ENCODE measurements at regions of chr6 and their contacts with region 1.

Region 1: DNA sequence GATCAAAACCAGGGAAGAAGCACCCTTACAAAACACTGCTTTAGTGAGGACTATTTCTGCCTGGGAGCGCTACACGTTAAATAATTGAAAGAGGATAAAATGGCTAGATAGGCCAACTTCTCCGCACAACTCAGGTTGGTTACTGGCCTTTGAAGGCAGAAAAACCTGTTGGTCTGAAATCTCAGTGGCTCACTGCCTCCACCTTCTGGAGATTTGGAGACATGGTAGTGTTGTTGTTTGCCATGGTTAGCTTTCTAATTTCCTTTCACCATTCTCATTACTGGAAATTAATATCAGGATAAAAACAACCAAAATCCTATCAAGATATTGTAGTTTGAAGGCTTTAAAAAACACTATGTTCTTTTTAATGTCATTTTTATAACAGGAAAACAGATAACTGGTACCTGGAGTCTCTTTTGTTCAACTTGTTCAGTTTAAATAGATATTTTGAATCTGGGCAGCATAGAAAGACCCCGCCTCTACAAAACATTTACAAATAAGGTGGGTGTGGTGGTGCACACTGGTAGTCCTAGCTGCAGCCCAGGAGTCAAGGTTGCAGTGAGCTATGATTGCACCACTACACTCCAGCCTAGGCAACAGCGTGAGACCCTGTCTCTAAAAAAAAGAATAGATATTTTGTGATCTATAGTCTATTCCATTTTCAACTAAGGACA is 27.5 kb upstream of the BCLAF1 start:
- DNase-seq: peak in 1 of 2 experiments; percentile 25
- H3K4me3 ChIP-seq: no peak overlapping the region
- H3K27ac ChIP-seq: no peak overlapping the region
- H3K4me1 ChIP-seq: no peaks in the 10 kb centered on the region
- H3K27me3 ChIP-seq: no peaks in the 10 kb centered on the region
- CTCF ChIP-seq: peak; percentile 17 to 80 (median 72)
- EP300 ChIP-seq: no peak
- POLR2A ChIP-seq: no peak
- RAD21 ChIP-seq: peak; percentile 85 to 86

Region 2: DNA sequence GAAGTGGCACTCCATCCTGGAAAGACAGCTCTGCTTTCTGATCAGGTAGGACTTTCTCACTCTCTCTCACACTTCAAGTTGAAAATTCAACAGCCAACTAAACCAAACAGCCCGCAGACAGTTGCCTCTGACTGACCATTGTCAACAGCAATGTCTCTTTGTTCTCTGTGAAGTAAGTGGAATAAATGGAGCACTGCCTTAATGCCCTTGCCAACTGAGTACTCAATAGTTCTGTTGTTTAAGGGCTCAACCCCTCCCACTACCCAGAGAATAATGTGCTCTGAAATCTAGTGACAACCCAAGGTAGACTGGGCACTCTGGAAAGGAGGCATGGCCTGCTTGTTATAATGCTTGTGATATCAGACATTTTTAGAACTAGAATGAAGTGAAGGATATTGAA is 10.7 kb before region 1 on chr6:
- CTCF ChIA-PET with region 1: interaction called, 23 read pairs
- POLR2A ChIA-PET with region 1: no interaction called
- DNase-seq: no peak
- H3K4me3 ChIP-seq: no peak overlapping the region
- H3K27ac ChIP-seq: no peak overlapping the region
- H3K4me1 ChIP-seq: no peaks in the 10 kb centered on the region
- H3K27me3 ChIP-seq: no peaks in the 10 kb centered on the region
- CTCF ChIP-seq: no peak
- EP300 ChIP-seq: no peak
- POLR2A ChIP-seq: no peak
- RAD21 ChIP-seq: no peak

Region 3: GRCh38 chr6:136334853-136335252 is 17.7 kb after region 1 on chr6:
- CTCF ChIA-PET with region 1: interaction called, 30 read pairs
- POLR2A ChIA-PET with region 1: interaction called, 10 read pairs
- DNase-seq: peak in 1 of 2 experiments; percentile 76
- H3K4me3 ChIP-seq: no peak overlapping the region
- H3K27ac ChIP-seq: no peak overlapping the region
- H3K4me1 ChIP-seq: no peaks in the 10 kb centered on the region; a peak in 1 of 7 replicates
- H3K27me3 ChIP-seq: no peaks in the 10 kb centered on the region; a peak in 1 of 7 replicates
- CTCF ChIP-seq: peak; percentile 48 to 77 (median 63)
- EP300 ChIP-seq: no peak
- POLR2A ChIP-seq: no peak
- RAD21 ChIP-seq: peak; percentile 37 to 43; a peak in 3 of 4 replicates

Region 4: DNA sequence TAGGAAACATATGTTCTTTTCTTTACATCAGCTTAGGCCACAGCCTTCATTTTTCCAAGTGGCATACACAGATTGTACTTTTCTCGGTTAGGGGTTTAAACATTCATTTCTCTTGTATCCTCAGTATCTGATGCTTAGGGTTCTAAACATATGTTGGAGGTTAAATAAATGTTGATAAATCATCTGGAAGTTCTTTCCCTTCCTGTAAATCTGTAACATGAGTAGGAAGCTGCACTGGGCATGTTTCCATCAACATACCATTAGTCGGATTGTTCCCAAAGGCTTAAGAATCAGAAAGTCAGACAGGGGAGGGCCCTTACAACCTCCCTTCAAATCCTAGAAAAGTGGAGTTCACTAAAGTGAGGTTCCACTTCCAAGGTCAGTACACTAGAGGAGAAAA is 27.3 kb after region 1 on chr6:
- CTCF ChIA-PET with region 1: interaction called, 12 read pairs
- POLR2A ChIA-PET with region 1: no interaction called
- DNase-seq: no peak
- H3K4me3 ChIP-seq: no peak overlapping the region
- H3K27ac ChIP-seq: no peak overlapping the region
- H3K4me1 ChIP-seq: no peaks in the 10 kb centered on the region
- H3K27me3 ChIP-seq: peaks cover 0 to 1% (median 0%) of the 10 kb centered on the region in 4 experiments; a peak in 1 of 7 replicates
- CTCF ChIP-seq: no peak
- EP300 ChIP-seq: no peak
- POLR2A ChIP-seq: no peak
- RAD21 ChIP-seq: no peak